ENCODE measurements at regions of chr7 and their contacts with region 1.

Region 1: GRCh38 chr7:156640257-156640948 is at the start of gene RNF32:
- DNase-seq: peak; percentile 82
- ATAC-seq: peak; percentile 88
- H3K4me3 ChIP-seq: peak within 1 kb of the TSS; percentile 78
- H3K27ac ChIP-seq: peak within 1 kb of the TSS; percentile 91
- H3K4me1 ChIP-seq: peaks cover 7% of the 10 kb centered on the region
- H3K27me3 ChIP-seq: no peaks in the 10 kb centered on the region
- CTCF ChIP-seq: no peak
- EP300 ChIP-seq: no peak
- POLR2A ChIP-seq: peak; percentile 86
- RAD21 ChIP-seq: no peak
- polyA plus RNA-seq, gene RNF32: 3.7 TPM

Region 2: GRCh38 chr7:155815332-155816191 is 824.8 kb before region 1 on chr7:
- CTCF ChIA-PET with region 1: no interaction called
- POLR2A ChIA-PET with region 1: no interaction called
- RAD21 ChIA-PET with region 1: no interaction called
- SMC1A ChIA-PET with region 1: no interaction called
- in situ Hi-C with region 1: no loop called
- intact Hi-C with region 1: loop called (anchors 10 kb)
- DNase-seq: no peak
- ATAC-seq: peak; percentile 99
- H3K4me3 ChIP-seq: no peak overlapping the region
- H3K27ac ChIP-seq: no peak overlapping the region
- H3K4me1 ChIP-seq: no peaks in the 10 kb centered on the region
- H3K27me3 ChIP-seq: peaks cover 6 to 8% of the 10 kb centered on the region in 2 experiments
- CTCF ChIP-seq: peak; percentile 79 to 97 (median 96); a peak in 5 of 6 replicates
- EP300 ChIP-seq: no peak
- POLR2A ChIP-seq: no peak
- RAD21 ChIP-seq: peak; percentile 97

Region 3: DNA sequence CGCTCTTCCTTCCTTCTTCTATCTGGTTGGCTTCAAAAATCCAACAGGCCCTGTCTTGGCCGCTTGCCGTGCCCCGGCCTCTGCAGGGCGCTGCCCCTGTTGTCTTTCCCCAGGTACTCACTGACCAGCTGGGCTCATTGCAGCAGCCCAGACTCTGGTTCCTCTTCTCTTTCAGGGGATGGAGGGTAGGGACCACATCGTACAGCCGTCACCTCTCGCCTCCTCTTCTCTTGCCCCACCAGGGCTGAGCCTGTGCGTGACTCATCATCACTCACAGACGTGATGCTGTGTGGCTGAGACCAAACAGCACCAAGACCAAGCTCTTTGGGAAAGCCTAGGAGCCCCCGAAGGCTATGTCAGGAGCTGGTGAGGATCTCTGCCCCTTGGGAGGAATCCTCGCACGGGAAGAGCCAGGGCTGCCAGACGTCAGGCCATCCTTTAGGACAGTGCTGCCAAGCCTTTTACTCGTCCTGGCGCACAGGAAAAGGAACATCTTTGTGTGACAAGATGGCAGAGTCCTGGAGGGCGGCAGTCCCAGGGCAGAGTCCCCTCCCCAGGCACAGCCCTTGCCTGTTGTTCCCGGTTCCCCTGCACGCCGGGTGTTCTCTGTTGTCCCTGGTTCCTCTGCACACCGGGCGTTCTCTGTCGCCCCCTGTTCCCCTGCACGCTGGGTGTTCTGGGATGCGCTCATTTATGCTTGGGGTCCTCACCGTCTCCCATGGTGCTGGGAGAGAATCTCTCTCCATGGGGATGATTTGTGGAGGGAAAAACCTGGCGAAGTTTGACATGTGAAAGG is 639.6 kb before region 1 on chr7:
- CTCF ChIA-PET with region 1: no interaction called
- POLR2A ChIA-PET with region 1: no interaction called
- RAD21 ChIA-PET with region 1: no interaction called
- SMC1A ChIA-PET with region 1: no interaction called
- in situ Hi-C with region 1: no loop called
- intact Hi-C with region 1: no loop called
- DNase-seq: no peak
- ATAC-seq: no peak
- H3K4me3 ChIP-seq: no peak overlapping the region
- H3K27ac ChIP-seq: no peak overlapping the region
- H3K4me1 ChIP-seq: peaks cover 8% of the 10 kb centered on the region
- H3K27me3 ChIP-seq: no peaks in the 10 kb centered on the region; a peak in 1 of 4 replicates
- CTCF ChIP-seq: no peak
- EP300 ChIP-seq: no peak
- POLR2A ChIP-seq: no peak
- RAD21 ChIP-seq: no peak

Region 4: GRCh38 chr7:156473476-156474240 is 166.7 kb before region 1 on chr7:
- CTCF ChIA-PET with region 1: interaction called, 3 read pairs
- POLR2A ChIA-PET with region 1: interaction called, 3 read pairs
- RAD21 ChIA-PET with region 1: no interaction called
- SMC1A ChIA-PET with region 1: no interaction called
- in situ Hi-C with region 1: no loop called
- intact Hi-C with region 1: loop called (anchors 2 kb)
- DNase-seq: no peak
- ATAC-seq: peak; percentile 56
- H3K4me3 ChIP-seq: no peak overlapping the region
- H3K27ac ChIP-seq: no peak overlapping the region
- H3K4me1 ChIP-seq: no peaks in the 10 kb centered on the region
- H3K27me3 ChIP-seq: no peaks in the 10 kb centered on the region; a peak in 1 of 4 replicates
- CTCF ChIP-seq: peak; percentile 64 to 69 (median 67); a peak in 5 of 6 replicates
- EP300 ChIP-seq: no peak
- POLR2A ChIP-seq: no peak
- RAD21 ChIP-seq: peak; percentile 71

Region 5: DNA sequence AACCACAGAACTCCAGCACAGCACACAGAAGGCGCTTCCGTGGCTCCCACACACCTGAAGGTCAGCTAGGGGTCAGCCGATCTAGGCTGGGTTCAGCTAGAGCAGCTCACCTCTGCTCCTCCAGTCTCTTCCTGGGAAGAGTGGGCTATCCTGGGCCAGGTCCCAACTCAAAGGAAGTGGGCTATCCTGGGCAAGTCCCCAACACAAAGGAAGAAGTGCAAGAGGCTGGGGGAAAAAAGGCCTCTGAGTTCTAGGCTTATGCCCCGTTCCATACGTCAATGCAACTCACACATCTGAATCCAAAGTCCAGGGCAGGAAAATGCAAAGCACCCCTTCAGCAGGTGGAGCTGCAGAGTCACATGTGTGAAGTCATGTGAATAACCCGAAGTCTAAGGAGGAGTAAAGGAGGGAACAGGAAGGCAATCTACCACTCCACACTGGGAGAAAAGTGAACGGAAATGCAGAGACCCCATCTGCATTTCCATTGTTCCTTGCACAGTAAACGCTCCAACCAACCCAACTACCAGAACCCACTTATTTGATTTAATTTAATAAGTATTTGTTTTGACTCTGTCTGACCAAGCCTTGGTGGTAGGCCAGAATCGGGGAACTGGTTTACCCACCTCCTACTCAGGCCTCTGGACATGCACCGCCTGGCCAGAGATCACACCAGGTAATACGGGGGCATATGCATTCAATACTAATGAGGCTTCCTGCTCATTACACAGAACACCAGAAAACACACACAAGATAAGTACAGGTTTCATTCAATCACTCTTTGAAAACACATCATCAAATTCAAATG is 95.3 kb before region 1 on chr7:
- CTCF ChIA-PET with region 1: interaction called, 4 read pairs
- POLR2A ChIA-PET with region 1: interaction called, 7 read pairs
- RAD21 ChIA-PET with region 1: interaction called, 7 read pairs
- SMC1A ChIA-PET with region 1: interaction called, 5 read pairs
- in situ Hi-C with region 1: no loop called
- intact Hi-C with region 1: loop called (anchors 2 kb)
- DNase-seq: no peak
- ATAC-seq: no peak
- H3K4me3 ChIP-seq: no peak overlapping the region
- H3K27ac ChIP-seq: no peak overlapping the region
- H3K4me1 ChIP-seq: 0 out of 2 replicates have a peak, but pooled peaks cover 3% of the 10 kb centered on the region
- H3K27me3 ChIP-seq: no peaks in the 10 kb centered on the region
- CTCF ChIP-seq: no peak
- EP300 ChIP-seq: no peak
- POLR2A ChIP-seq: no peak
- RAD21 ChIP-seq: no peak

Region 6: GRCh38 chr7:156780724-156781455 is 140.5 kb after region 1 on chr7:
- CTCF ChIA-PET with region 1: no interaction called
- POLR2A ChIA-PET with region 1: interaction called, 6 read pairs
- RAD21 ChIA-PET with region 1: interaction called, 7 read pairs
- SMC1A ChIA-PET with region 1: interaction called, 19 read pairs
- in situ Hi-C with region 1: no loop called
- intact Hi-C with region 1: no loop called
- DNase-seq: peak; percentile 86
- ATAC-seq: peak; percentile 96
- H3K4me3 ChIP-seq: 0 out of 2 replicates have a peak overlapping the region, but pooled peaks have one; percentile 16
- H3K27ac ChIP-seq: peak overlapping the region; percentile 85
- H3K4me1 ChIP-seq: peaks cover 33% of the 10 kb centered on the region
- H3K27me3 ChIP-seq: no peaks in the 10 kb centered on the region
- CTCF ChIP-seq: no peak
- EP300 ChIP-seq: peak; percentile 80; a peak in 2 of 4 replicates
- POLR2A ChIP-seq: no peak
- RAD21 ChIP-seq: peak; percentile 34; the same call in 1 of the 2 replicates